H1 (cell line): ENCODE measurements at regions of chr15 and their contacts with region 1.

Region 1: GRCh38 chr15:40108855-40109735 is at the start of gene BMF:
- DNase-seq: peak; percentile 98 to 100
- H3K4me3 ChIP-seq: peak within 1 kb of the TSS; percentile 71 to 92 (median 90)
- H3K27ac ChIP-seq: peak within 1 kb of the TSS; percentile 29; the same call in 1 of the 2 replicates
- H3K4me1 ChIP-seq: peaks cover 26 to 50% (median 37%) of the 10 kb centered on the region in 4 experiments
- H3K27me3 ChIP-seq: no peaks in the 10 kb centered on the region
- CTCF ChIP-seq: peak; percentile 10 to 45 (median 43); a peak in 3 of 4 replicates
- EP300 ChIP-seq: no peak
- POLR2A ChIP-seq: no peak
- RAD21 ChIP-seq: peak; percentile 24 to 48
- total RNA-seq, gene BMF: 24.2 and 30.9 TPM in 2 replicates

Region 2: GRCh38 chr15:39976291-39977274 is 132.5 kb before region 1 on chr15:
- CTCF ChIA-PET with region 1: no interaction called
- POLR2A ChIA-PET with region 1: no interaction called
- DNase-seq: peak; percentile 15 to 80
- H3K4me3 ChIP-seq: peak overlapping the region; percentile 17 to 45 (median 25); a peak in 7 of 8 replicates
- H3K27ac ChIP-seq: no peak overlapping the region
- H3K4me1 ChIP-seq: no peaks in the 10 kb centered on the region
- H3K27me3 ChIP-seq: peaks cover 0 to 1% (median 0%) of the 10 kb centered on the region in 4 experiments; a peak in 1 of 7 replicates
- CTCF ChIP-seq: peak; percentile 17 to 40 (median 35); a peak in 3 of 4 replicates
- EP300 ChIP-seq: no peak
- POLR2A ChIP-seq: no peak
- RAD21 ChIP-seq: peak; percentile 18 to 23; a peak in 2 of 4 replicates

Region 3: DNA sequence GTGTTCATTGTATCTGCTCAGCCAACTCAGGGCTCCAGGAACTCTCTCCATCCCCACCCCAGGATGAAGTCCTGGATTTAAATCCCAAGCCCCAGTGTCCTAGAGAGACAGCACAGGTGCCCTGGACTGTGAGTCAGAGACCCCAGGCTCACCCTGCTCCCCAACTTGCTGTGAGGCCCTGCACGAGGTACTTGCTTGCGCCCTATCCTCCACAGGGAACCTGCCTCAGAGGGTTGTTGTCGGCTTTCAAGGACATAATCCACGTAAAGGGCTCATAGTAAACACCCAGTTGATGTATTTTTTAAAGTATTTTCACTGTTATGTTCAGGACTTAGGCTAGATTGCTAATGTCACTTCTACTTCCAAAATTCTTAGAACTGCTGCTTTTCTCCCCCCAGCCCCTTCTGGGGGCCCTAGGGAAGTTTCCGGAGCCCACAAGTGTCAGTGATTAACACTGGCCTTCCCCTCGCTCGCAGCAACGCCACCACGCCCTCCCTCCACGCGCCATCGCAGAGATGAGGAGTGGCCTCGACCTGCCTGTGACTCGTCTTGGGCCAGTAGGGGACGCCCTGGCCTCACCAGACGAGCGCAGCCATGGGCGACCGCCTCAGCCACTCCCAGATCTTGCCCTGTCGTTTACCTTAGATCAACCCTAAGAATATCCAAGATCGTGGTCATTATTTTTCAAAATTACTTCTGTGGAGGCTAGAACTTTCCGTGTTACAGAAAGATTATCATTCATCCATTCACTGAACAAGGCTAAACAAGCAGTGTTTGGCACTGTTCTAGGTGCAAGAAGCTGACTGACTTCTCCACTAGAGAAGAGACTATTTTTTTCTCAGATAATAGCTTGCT is 64.2 kb before region 1 on chr15:
- CTCF ChIA-PET with region 1: interaction called, 406 read pairs
- POLR2A ChIA-PET with region 1: interaction called, 17 read pairs
- DNase-seq: peak in 1 of 2 experiments; percentile 86
- H3K4me3 ChIP-seq: peak overlapping the region in 1 of 4 experiments; percentile 46; a peak in 2 of 8 replicates
- H3K27ac ChIP-seq: no peak overlapping the region
- H3K4me1 ChIP-seq: peaks cover 0 to 11% (median 6%) of the 10 kb centered on the region in 4 experiments; a peak in 6 of 7 replicates
- H3K27me3 ChIP-seq: no peaks in the 10 kb centered on the region
- CTCF ChIP-seq: peak; percentile 92 to 97 (median 97)
- EP300 ChIP-seq: no peak
- POLR2A ChIP-seq: no peak
- RAD21 ChIP-seq: peak; percentile 98 to 99

Region 4: GRCh38 chr15:40063563-40064011 is 45.5 kb before region 1 on chr15:
- CTCF ChIA-PET with region 1: interaction called, 65 read pairs
- POLR2A ChIA-PET with region 1: interaction called, 4 read pairs
- DNase-seq: no peak
- H3K4me3 ChIP-seq: no peak overlapping the region
- H3K27ac ChIP-seq: no peak overlapping the region
- H3K4me1 ChIP-seq: peaks cover 0 to 9% (median 0%) of the 10 kb centered on the region in 4 experiments; a peak in 3 of 7 replicates
- H3K27me3 ChIP-seq: peaks cover 0 to 2% (median 0%) of the 10 kb centered on the region in 4 experiments; a peak in 1 of 7 replicates
- CTCF ChIP-seq: no peak
- EP300 ChIP-seq: no peak
- POLR2A ChIP-seq: no peak
- RAD21 ChIP-seq: no peak

Region 5: GRCh38 chr15:40092256-40092978 is 16.7 kb before region 1 on chr15:
- CTCF ChIA-PET with region 1: interaction called, 312 read pairs
- POLR2A ChIA-PET with region 1: interaction called, 28 read pairs
- DNase-seq: no peak
- H3K4me3 ChIP-seq: peak overlapping the region in 1 of 4 experiments; percentile 26; a peak in 2 of 8 replicates
- H3K27ac ChIP-seq: peak overlapping the region; percentile 36; the same call in 1 of the 2 replicates
- H3K4me1 ChIP-seq: peaks cover 22 to 67% (median 46%) of the 10 kb centered on the region in 4 experiments
- H3K27me3 ChIP-seq: no peaks in the 10 kb centered on the region
- CTCF ChIP-seq: no peak
- EP300 ChIP-seq: no peak
- POLR2A ChIP-seq: no peak
- RAD21 ChIP-seq: no peak

Region 6: DNA sequence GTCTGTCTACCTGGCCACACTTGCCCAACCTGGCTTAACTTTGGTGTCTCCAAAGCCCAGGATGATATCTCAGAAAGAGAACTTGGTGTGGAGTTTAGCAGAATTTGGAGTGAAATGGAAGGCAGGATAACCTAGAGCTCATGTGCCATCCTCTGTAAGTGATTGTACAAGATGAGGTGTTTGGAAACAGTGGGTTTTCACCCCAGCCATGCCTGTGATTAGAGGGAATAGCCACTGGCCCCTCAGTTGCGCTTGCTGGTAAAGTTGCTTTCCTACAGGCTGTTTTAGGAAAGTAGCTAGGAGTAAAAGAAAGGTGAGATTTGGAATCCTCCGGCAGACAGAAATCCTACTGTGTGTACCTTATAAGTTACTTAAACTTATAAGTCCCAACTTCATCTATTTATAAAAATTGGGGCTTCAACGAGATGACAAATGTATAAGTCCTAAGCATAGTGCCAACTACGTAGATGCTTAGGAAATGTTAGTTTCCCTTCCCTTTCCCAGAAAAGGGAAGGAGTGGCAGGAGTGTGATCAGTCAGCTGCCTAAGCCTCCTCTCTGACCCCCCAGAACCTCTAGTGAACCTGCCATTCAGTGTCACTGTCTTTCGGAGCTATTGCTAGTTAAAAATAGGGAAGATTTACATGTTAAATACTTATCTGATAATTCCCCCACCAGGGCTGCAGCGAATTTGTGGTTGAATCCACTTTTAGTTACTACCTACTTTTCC is 13.0 kb after region 1 on chr15:
- CTCF ChIA-PET with region 1: interaction called, 45 read pairs
- POLR2A ChIA-PET with region 1: interaction called, 26 read pairs
- DNase-seq: peak in 1 of 2 experiments; percentile 37
- H3K4me3 ChIP-seq: no peak overlapping the region
- H3K27ac ChIP-seq: no peak overlapping the region
- H3K4me1 ChIP-seq: peaks cover 4 to 16% (median 12%) of the 10 kb centered on the region in 4 experiments; a peak in 5 of 7 replicates
- H3K27me3 ChIP-seq: no peaks in the 10 kb centered on the region
- CTCF ChIP-seq: no peak
- EP300 ChIP-seq: no peak
- POLR2A ChIP-seq: no peak
- RAD21 ChIP-seq: no peak